Left ventricle myocardium inferior (tissue), 1 donor: ENCODE measurements at regions of chr11 and their contacts with region 1.

Region 1: DNA sequence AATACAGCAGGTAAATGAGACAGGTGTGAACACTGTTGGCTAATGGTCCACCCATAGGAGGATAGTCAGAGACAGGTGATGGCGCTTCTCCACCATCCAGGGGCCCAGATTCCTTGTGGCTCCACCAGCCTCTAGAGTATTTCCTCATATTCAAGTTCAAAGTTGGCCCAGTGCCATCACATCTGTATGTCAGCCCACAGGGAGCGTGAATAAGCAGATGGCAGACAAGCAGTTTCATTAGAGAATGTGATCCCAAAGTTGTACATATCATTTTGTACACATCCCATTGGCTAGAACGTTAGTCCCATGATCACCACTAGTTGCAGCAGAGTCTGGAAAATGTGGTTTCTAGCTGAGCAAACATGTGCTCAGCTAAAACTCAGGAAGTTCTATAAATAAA is 11.0 kb upstream of the CWF19L2 start:
- DNase-seq: no peak
- H3K4me3 ChIP-seq: no peak overlapping the region
- H3K27ac ChIP-seq: no peak overlapping the region
- H3K4me1 ChIP-seq: no peaks in the 10 kb centered on the region
- H3K27me3 ChIP-seq: peaks cover 68% of the 10 kb centered on the region
- CTCF ChIP-seq: no peak

Region 2: DNA sequence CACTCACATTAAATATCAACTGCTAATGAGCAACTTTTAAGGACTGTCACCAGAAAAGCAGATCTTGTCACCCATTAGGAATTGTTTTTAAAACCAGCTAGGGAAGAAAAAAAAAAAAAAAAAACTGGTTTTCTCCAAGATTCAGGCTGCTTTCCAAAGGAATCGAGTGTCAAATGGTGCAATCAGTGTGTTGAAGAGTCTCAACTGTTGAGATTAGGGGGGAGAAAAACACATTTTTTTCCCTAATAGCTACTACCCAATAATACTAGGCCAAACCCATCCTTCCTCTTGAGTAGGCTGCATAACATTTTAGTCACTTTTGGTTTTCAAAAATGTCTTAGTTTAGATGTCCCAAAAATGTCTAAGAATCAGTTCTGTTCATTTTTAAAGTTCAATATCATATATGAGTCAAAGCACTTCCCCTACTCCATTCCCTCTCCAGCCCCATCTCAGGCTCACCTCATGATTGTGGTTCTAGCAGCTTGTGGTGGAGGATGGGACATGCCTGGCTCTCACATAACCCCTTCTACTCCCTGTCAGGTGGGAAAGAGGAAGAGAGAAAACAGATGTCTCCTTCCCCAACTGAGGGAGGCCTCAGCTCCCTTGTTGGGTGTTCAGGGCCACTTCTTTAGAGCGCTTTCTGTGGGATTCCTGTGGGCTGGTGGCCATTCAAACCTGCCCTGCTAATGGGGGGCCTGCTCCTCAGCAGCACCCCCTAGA is 204.6 kb before region 1 on chr11:
- intact Hi-C with region 1: no loop called
- DNase-seq: no peak
- H3K4me3 ChIP-seq: no peak overlapping the region
- H3K27ac ChIP-seq: peak overlapping the region; percentile 16
- H3K4me1 ChIP-seq: no peaks in the 10 kb centered on the region
- H3K27me3 ChIP-seq: peaks cover 5% of the 10 kb centered on the region
- CTCF ChIP-seq: no peak

Region 3: GRCh38 chr11:107446822-107447431 is 21.7 kb before region 1 on chr11:
- intact Hi-C with region 1: loop called (anchors 2 kb)
- DNase-seq: no peak
- H3K4me3 ChIP-seq: no peak overlapping the region
- H3K27ac ChIP-seq: no peak overlapping the region
- H3K4me1 ChIP-seq: no peaks in the 10 kb centered on the region
- H3K27me3 ChIP-seq: no peaks in the 10 kb centered on the region
- CTCF ChIP-seq: no peak

Region 4: GRCh38 chr11:107565219-107565937 is 96.8 kb after region 1 on chr11 and contains the start of gene ALKBH8:
- intact Hi-C with region 1: no loop called
- DNase-seq: peak; percentile 79
- H3K4me3 ChIP-seq: peak within 1 kb of the TSS; percentile 94
- H3K27ac ChIP-seq: peak within 1 kb of the TSS; percentile 89
- H3K4me1 ChIP-seq: peaks cover 43% of the 10 kb centered on the region
- H3K27me3 ChIP-seq: peaks cover 16% of the 10 kb centered on the region
- CTCF ChIP-seq: peak; percentile 16
- total RNA-seq, gene ALKBH8: 6.7 TPM

Region 5: GRCh38 chr11:107908306-107908705 is 439.7 kb after region 1 on chr11:
- intact Hi-C with region 1: no loop called
- DNase-seq: no peak
- H3K4me3 ChIP-seq: no peak overlapping the region
- H3K27ac ChIP-seq: no peak overlapping the region
- H3K4me1 ChIP-seq: no peaks in the 10 kb centered on the region
- H3K27me3 ChIP-seq: peaks cover 25% of the 10 kb centered on the region
- CTCF ChIP-seq: no peak